RWPE1 (cell line): ENCODE measurements at regions of chr19 and their contacts with region 1.

Region 1: DNA sequence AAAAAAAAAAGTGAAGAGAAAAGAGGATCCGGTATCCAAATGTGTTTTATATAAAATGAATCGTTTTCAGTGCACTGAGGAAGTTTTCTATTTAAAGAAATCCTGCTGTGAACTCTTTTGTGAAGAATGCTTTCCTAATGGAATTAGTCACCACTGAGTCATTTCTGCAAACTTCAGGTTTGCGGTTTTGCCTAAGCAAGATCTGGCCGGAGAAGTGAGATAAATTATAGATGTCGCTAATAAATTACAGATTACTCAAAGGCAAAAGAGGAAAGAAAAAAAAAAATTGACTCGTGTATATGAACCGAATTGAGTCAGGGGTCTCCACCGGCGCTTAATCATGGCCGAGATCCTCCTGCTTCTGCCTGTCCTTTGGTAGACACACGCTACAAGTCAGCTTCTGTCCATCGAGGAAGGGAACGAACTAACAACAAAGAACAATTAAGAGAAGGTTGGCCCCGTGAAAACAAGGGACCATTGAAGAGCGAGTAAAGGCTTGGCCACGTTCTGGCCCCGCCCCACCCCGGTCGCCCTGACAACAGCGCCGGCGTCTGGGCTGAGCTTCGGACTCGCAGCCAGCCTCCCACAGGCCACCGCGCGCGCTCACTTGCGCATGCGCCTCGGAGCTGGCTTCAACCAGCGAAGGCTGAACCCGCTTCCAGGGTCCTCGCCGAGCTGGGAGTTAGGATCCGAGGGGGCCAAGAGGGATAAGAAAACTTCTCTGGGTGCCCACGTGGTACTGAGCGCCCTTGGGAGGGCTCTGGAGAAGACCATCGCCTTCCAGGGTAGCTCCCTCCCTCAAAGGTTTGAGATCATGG is 33.0 kb upstream of the MRI1 start:
- DNase-seq: peak; percentile 98
- H3K27ac ChIP-seq: peak overlapping the region; percentile 99
- CTCF ChIP-seq: no peak

Region 2: DNA sequence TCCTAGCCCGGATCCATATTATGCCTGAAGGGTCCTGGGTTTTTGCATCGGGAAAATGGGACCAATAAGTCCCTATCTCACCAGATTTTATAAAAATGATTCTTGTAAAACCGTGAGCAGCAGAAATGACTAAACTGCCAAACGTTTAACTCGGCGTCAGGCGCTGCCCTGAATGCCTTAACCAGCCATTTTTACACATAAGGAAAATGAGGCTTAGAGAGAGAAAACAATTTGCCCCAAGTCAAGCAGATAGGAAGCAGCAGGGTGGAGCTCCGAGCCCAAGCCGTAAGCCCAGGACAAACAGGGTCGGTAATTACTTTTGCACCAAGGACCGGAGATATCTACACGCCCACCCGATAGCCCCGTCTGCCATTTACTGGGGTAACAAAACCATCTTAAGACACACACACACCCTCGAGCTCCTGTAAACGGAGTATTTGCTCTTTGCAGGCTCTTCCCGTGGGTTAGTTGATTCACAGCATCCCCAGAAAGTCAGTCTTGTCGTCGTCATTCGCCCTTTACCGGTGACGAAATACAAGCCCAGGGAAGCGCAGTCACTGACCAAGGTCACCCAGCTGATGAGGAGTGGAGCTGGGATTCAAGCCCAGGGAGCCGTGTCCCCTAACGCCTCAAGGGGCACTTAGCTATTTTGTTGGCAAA is 16.9 kb after region 1 on chr19:
- CTCF ChIA-PET with region 1: no interaction called
- POLR2A ChIA-PET with region 1: interaction called, 12 read pairs
- DNase-seq: no peak
- H3K27ac ChIP-seq: peak overlapping the region; percentile 87
- CTCF ChIP-seq: no peak

Region 3: DNA sequence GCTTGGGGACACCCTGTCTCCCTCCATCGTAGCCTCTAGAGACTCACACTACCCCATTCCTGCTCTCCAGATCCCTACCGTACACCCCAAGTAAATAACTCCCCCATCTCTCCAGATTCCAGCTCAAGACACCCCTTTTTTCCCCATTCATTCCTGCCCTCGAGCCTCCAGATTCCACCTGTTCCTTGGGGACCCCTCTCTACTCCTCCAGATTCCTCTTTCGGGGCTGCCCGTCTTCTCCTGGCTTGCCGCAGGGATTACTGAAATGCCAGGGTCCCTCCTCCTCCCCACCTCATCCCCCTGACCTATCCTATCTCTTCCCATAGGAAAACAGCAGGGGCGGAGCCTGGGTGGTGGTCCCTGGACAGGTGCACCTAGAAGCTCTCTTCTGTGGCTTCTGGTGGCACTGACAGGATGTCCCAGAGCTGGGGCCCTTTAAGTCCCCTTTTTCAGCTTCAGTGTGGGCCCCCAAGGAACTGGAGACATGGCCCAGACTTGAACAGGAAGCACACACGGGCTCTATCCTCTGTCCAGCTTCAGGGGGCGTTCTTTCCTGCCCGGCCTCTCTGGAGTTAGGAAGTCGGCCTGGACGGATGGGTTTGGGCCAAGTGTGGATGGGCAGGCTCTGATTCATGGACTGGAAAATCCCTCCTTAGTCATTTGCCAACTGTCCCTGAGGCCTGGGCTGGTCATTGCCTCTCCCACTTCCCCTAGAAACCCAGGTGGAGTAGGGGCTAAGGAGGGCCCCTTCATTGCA is 65.1 kb after region 1 on chr19:
- CTCF ChIA-PET with region 1: no interaction called
- POLR2A ChIA-PET with region 1: interaction called, 14 read pairs
- DNase-seq: peak; percentile 94
- H3K27ac ChIP-seq: peak overlapping the region; percentile 93
- CTCF ChIP-seq: no peak; the same call in 1 of the 2 replicates